Heart right ventricle (tissue), 16 donors: ENCODE measurements at regions of chr2 and their contacts with region 1.

Region 1: GRCh38 chr2:62202019-62202722 is 6.3 kb downstream of the B3GNT2 start:
- DNase-seq: no peak
- ATAC-seq: no peak
- H3K4me3 ChIP-seq: no peak overlapping the region
- H3K27ac ChIP-seq: peak overlapping the region in 3 of 10 donors; percentile 19 to 50 (median 35)
- H3K4me1 ChIP-seq: peaks cover 4 to 94% (median 79%) of the 10 kb centered on the region in 9 donors
- H3K27me3 ChIP-seq: no peaks in the 10 kb centered on the region
- CTCF ChIP-seq: no peak

Region 2: GRCh38 chr2:62014102-62014501 is 188.1 kb before region 1 on chr2:
- intact Hi-C with region 1: loop called in 4 of 10 experiments (anchors 5 to 10 kb)
- DNase-seq: peak; percentile 62 to 82
- ATAC-seq: peak; percentile 89 to 99 (median 97)
- H3K4me3 ChIP-seq: no peak overlapping the region
- H3K27ac ChIP-seq: peak overlapping the region in 7 of 10 donors; percentile 5 to 65 (median 55)
- H3K4me1 ChIP-seq: peaks cover 4 to 34% (median 23%) of the 10 kb centered on the region in 9 donors
- H3K27me3 ChIP-seq: no peaks in the 10 kb centered on the region
- CTCF ChIP-seq: peak in 7 of 9 donors; percentile 35 to 67 (median 51)

Region 3: DNA sequence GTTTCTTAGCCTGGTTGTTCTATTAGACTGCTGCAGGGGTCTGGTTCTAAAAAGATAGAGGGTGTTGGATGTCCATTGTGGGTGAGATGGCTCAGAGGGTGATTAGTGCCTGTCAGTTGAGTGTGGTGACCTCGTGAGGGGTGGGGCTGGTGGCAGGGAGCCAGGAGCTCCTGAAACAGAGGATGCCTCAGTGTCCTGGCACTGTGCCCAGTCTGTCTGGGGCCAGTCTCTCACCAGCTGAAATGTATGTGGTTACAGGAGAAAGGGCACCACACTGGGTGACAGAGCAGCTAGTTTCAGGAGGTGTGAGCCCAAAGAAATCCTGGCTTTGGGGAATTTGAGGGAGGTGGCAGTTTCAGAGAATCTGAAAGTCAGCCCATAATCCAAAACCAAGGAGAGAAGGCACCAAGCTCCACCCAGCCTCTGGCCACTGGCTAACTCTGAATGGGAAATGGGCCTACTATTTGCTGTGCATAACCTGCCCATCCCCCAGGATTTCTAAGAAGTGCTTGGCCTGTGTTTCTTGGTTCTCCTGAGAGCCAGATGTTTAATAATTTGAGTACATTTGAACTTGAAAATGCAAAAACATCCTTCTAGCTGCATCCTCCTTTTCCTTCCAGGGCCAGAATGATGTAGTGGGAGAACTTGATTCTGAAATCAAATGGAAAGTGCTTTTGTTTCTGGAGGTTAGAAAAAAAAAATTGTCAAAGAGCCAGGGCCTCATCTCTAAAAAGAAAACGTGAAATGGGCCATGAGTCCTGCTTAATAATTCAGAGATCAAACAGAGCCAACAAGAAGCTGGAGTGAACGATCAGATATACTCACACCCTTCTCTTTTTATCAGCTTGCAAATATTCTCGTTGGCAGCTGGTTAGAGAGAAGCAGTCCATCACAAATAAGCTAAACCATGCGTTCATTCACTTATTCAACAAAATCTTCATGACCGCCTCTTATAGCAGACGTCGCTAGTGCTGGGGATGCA is 86.0 kb after region 1 on chr2:
- intact Hi-C with region 1: loop called in 4 of 10 experiments (anchors 5 to 10 kb)
- DNase-seq: peak; percentile 70 to 79
- ATAC-seq: peak; percentile 51 to 89 (median 74)
- H3K4me3 ChIP-seq: no peak overlapping the region
- H3K27ac ChIP-seq: peak overlapping the region in 9 of 10 donors; percentile 22 to 82 (median 58)
- H3K4me1 ChIP-seq: peaks cover 9 to 44% (median 33%) of the 10 kb centered on the region in 9 donors
- H3K27me3 ChIP-seq: no peaks in the 10 kb centered on the region
- CTCF ChIP-seq: no peak

Region 4: GRCh38 chr2:62293490-62294271 is 91.5 kb after region 1 on chr2:
- intact Hi-C with region 1: loop called in 4 of 10 experiments (anchors 5 to 10 kb)
- DNase-seq: peak; percentile 47 to 58
- ATAC-seq: peak; percentile 71 to 85 (median 80)
- H3K4me3 ChIP-seq: peak overlapping the region in 1 of 10 donors; percentile 5
- H3K27ac ChIP-seq: peak overlapping the region; percentile 15 to 69 (median 64)
- H3K4me1 ChIP-seq: peaks cover 13 to 56% (median 38%) of the 10 kb centered on the region in 9 donors
- H3K27me3 ChIP-seq: no peaks in the 10 kb centered on the region
- CTCF ChIP-seq: no peak